Calu3 (cell line): ENCODE measurements at regions of chr20 and their contacts with region 1.

Region 1: GRCh38 chr20:39214828-39215227 is 252.7 kb downstream of the DHX35 start:
- DNase-seq: no peak
- H3K4me3 Mint-ChIP-seq: no peak overlapping the region
- H3K27ac Mint-ChIP-seq: no peak overlapping the region
- H3K4me1 Mint-ChIP-seq: no peaks in the 10 kb centered on the region
- H3K27me3 Mint-ChIP-seq: peaks cover 81% of the 10 kb centered on the region
- CTCF ChIP-seq: no peak

Region 2: DNA sequence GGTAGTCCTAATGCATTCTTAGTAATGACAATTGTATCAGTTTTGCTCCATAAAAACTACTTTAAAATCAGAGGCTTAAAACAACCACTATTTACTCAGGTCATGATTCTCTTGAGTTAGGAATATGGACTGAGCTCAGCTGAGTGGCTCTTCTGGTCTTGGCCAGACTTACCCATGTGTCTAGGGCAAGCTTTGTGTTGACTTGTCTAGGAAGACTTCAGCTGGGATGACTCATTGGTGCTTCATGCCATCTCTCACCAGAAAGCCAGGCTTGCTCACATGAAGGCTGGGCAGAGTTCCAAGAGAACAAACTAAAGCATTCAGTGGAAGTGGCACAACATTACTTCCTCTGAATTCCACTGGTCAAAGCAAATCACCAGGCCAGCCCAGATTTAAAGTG is 97.3 kb before region 1 on chr20:
- CTCF ChIA-PET with region 1: interaction called, 10 read pairs
- intact Hi-C with region 1: loop called (anchors 10 kb)
- DNase-seq: peak; percentile 87
- H3K4me3 Mint-ChIP-seq: no peak overlapping the region
- H3K27ac Mint-ChIP-seq: no peak overlapping the region
- H3K4me1 Mint-ChIP-seq: peaks cover 8% of the 10 kb centered on the region
- H3K27me3 Mint-ChIP-seq: peaks cover 84% of the 10 kb centered on the region
- CTCF ChIP-seq: no peak

Region 3: DNA sequence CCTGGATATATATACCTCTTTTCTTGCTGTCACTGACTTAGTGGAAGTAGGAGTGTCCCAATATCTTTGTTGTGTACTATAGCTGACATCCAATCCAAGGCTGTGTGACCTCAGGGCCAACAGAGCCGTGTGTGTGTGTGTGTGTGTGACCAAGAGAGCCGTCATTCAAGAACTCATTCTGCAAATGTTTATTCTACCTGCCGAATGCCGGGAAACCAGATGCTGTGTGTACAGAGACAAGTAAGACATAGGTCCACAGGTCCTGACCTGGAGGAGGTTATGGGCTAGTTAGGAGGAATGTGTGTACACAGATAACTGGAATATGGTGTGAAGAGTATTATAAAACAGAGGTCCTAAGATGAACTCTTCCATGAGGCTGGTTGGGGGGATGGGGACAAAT is 62.7 kb before region 1 on chr20:
- CTCF ChIA-PET with region 1: no interaction called
- intact Hi-C with region 1: loop called (anchors 10 kb)
- DNase-seq: no peak
- H3K4me3 Mint-ChIP-seq: no peak overlapping the region
- H3K27ac Mint-ChIP-seq: no peak overlapping the region
- H3K4me1 Mint-ChIP-seq: no peaks in the 10 kb centered on the region
- H3K27me3 Mint-ChIP-seq: peaks cover 97% of the 10 kb centered on the region
- CTCF ChIP-seq: no peak